Testis (tissue), 5 donors: ENCODE measurements at regions of chr22 and their contacts with region 1.

Region 1: DNA sequence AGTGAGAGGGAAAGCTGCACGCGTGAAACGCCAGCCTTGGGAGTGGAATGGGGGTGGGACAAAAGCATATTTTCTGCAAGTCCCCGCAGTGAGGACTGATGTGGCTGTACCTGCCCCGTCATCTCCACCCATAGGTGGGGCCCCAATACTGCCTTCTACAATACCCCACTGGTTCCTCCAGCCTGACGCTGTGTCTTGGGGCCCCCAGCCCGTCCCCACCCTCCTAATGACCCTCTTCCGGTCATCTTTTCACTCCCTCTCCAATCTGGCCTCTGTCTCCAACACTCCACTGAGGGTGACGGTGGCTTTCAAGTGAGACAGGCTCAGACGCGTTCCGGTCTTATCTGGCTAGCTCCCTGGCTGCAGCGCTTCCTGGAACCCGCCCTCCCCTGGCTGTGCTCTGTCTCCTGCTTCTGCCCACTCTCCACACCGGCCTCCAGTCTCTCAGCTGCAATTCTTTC is 104.2 kb downstream of the MICAL3 start:
- DNase-seq: peak; percentile 86
- H3K4me3 ChIP-seq: no peak overlapping the region
- H3K27ac ChIP-seq: peak overlapping the region; percentile 18 to 64
- H3K4me1 ChIP-seq: peaks cover 46% of the 10 kb centered on the region
- H3K27me3 ChIP-seq: no peaks in the 10 kb centered on the region
- CTCF ChIP-seq: no peak
- POLR2A ChIP-seq: no peak

Region 2: DNA sequence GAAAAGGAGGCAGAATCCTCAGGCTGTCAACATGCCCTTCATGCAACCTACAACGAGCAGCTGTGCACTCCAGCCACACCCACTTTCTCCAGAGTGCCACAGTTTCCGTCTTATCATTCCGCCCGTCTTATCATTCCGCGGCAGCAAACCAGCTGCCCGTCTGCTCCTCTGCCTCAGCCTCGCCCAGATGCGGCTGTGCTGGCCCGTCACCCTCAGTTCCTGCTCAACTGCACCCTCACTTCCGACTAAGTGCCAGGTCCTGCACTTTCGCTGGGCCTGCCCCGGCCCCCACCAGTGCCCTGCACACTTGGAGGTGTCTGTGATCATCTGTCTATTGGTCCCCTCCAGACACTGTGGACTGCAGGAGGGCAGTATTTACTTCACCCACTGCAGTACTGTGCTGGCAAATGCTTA is 60.5 kb after region 1 on chr22:
- intact Hi-C with region 1: loop called (anchors 10 kb)
- DNase-seq: peak; percentile 50
- H3K4me3 ChIP-seq: no peak overlapping the region
- H3K27ac ChIP-seq: no peak overlapping the region
- H3K4me1 ChIP-seq: peaks cover 15% of the 10 kb centered on the region
- H3K27me3 ChIP-seq: no peaks in the 10 kb centered on the region
- CTCF ChIP-seq: no peak
- POLR2A ChIP-seq: no peak